ENCODE measurements at regions of chr2 and their contacts with region 1.

Region 1: DNA sequence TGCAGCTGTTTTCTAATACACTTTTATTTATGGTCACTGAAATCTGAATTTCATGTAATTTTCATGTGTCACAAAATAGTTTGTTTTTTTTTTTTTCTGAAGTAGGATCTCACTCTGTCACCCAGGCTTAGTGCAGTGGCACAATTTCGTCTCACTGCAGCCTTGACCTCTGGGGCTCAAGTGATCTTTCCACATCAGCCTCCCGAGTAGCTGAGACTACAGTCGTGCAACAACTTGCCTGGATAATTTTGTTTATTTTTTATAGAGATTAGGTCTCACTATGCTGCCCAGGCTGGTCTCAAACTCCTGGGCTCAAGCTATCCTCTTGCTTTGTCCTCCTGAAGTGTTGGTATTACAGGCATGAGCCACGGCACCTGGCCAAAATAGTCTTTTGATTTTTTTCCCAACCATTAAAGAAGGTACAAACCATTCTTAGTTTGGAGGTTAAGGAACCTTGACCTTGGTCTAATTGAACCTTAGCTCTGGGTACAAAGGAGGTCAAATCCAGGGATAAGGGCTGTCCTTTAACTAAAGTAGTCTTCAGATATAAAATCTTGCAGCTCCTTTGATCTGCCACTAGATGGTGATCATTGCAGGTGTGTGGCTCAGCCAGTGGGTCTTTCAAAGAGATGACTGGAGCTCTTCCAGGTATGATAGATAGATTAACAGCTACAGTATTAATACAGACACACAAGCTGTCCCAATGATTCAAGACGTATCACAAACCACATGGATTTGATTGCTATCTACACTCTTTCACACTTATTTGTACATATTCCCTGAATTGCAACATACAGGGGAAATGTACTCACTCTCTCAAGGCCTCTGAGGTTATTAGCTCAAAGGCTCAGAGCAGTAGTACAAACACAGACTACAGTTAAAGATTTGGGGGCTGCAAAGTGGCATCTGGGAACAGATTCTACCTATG is 4.7 kb upstream of the KRCC1 start:
- DNase-seq: no peak
- H3K4me3 ChIP-seq: no peak overlapping the region
- H3K27ac ChIP-seq: no peak overlapping the region
- H3K27me3 ChIP-seq: peaks cover 4% of the 10 kb centered on the region
- CTCF ChIP-seq: peak; percentile 84

Region 2: GRCh38 chr2:88038263-88039105 is 21.8 kb before region 1 on chr2:
- CTCF ChIA-PET with region 1: interaction called, 15 read pairs
- POLR2A ChIA-PET with region 1: no interaction called
- DNase-seq: peak; percentile 84
- H3K4me3 ChIP-seq: no peak overlapping the region
- H3K27ac ChIP-seq: peak overlapping the region; percentile 84
- H3K27me3 ChIP-seq: no peaks in the 10 kb centered on the region
- CTCF ChIP-seq: no peak

Region 3: GRCh38 chr2:88074854-88075292 is 14.6 kb after region 1 on chr2:
- CTCF ChIA-PET with region 1: interaction called, 17 read pairs
- POLR2A ChIA-PET with region 1: no interaction called
- DNase-seq: peak; percentile 21
- H3K4me3 ChIP-seq: no peak overlapping the region
- H3K27ac ChIP-seq: no peak overlapping the region
- H3K27me3 ChIP-seq: peaks cover 4% of the 10 kb centered on the region
- CTCF ChIP-seq: no peak

Region 4: GRCh38 chr2:88131201-88131998 is 71.2 kb after region 1 on chr2:
- CTCF ChIA-PET with region 1: no interaction called
- POLR2A ChIA-PET with region 1: no interaction called
- DNase-seq: no peak
- H3K4me3 ChIP-seq: no peak overlapping the region
- H3K27ac ChIP-seq: no peak overlapping the region
- H3K27me3 ChIP-seq: no peaks in the 10 kb centered on the region
- CTCF ChIP-seq: no peak

Region 5: DNA sequence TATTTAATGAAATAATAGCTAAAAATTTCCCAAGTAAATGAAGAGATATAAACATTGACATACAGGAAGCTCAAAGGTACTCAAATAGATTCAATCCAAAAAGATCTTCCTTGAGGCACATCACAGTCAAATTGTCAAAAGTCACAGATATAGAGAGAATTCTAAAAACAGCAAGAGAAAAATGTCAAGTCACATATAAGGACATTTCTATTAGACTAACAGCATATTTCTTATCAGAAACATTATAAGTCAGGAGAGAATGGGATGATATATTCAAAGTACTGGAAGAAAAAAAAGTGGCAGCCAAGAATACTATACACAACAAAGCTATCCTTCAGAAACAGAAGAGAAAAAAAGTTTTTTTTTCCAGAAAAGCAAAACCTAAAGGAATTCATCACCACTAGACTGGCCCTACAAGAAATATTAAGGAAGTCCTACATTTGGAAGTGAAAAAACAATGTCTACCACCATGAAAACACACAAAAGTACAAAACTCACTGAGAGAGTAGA is 88.7 kb after region 1 on chr2:
- CTCF ChIA-PET with region 1: interaction called, 10 read pairs
- POLR2A ChIA-PET with region 1: no interaction called
- DNase-seq: no peak
- H3K4me3 ChIP-seq: no peak overlapping the region
- H3K27ac ChIP-seq: no peak overlapping the region
- H3K27me3 ChIP-seq: no peaks in the 10 kb centered on the region
- CTCF ChIP-seq: no peak

Region 6: DNA sequence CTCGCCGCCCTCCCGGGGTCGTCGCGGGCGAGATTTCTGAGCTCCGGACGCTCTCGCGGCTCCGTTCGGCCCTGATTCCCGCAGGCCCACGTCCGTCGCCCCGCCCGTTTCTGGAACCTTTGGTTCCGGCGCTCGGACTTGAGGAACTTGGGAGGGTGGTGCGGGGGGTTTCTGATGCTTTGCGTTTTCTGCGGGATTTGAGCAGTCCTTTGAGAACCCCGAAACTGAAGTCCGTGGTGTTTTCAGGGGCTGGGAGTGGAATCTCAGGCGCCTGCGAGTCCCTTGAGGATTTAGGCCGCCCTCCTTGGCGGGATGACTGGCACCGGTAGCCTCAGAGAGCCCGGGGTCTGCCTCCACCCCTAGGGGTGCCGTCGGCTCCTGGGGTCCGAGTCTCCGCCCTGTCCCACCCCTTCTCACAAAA is 110.2 kb after region 1 on chr2:
- CTCF ChIA-PET with region 1: interaction called, 10 read pairs
- POLR2A ChIA-PET with region 1: no interaction called
- DNase-seq: no peak
- H3K4me3 ChIP-seq: peak overlapping the region; percentile 60
- H3K27ac ChIP-seq: no peak overlapping the region
- H3K27me3 ChIP-seq: peaks cover 5% of the 10 kb centered on the region
- CTCF ChIP-seq: peak; percentile 7; the same call in 1 of the 2 replicates